ENCODE measurements at regions of chr3 and their contacts with region 1.

Region 1: GRCh38 chr3:5057857-5058324 is 64.2 kb upstream of the ARL8B start:
- DNase-seq: peak; percentile 38
- ATAC-seq: peak; percentile 90
- H3K4me3 Mint-ChIP-seq: no peak overlapping the region
- H3K27ac Mint-ChIP-seq: peak overlapping the region; percentile 3
- H3K4me1 Mint-ChIP-seq: peaks cover 42% of the 10 kb centered on the region
- H3K27me3 Mint-ChIP-seq: no peaks in the 10 kb centered on the region
- CTCF ChIP-seq: peak; percentile 26

Region 2: DNA sequence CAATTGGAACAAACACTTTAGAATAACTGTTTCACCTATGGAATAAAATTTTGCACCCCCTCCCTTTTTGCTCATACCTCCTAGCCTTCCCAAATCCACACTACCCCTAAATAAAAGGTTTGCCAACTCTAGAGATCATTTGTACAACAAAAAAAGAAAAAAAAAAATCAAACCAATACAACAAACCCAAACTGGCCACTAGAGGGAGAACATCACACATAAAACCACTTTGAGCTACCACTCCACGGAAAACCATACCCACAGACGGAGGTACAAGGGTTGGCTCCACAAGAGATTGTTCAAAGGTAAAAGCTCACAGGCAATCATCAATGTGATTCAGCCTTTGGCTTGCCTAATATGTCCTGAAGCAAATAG is 707.1 kb before region 1 on chr3:
- CTCF ChIA-PET with region 1: interaction called, 4 read pairs
- POLR2A ChIA-PET with region 1: no interaction called
- intact Hi-C with region 1: loop called (anchors 2 kb)
- DNase-seq: no peak
- ATAC-seq: peak; percentile 88
- H3K4me3 Mint-ChIP-seq: peak overlapping the region; percentile 44
- H3K27ac Mint-ChIP-seq: peak overlapping the region; percentile 8
- H3K4me1 Mint-ChIP-seq: peaks cover 9% of the 10 kb centered on the region
- H3K27me3 Mint-ChIP-seq: no peaks in the 10 kb centered on the region
- CTCF ChIP-seq: peak; percentile 26

Region 3: DNA sequence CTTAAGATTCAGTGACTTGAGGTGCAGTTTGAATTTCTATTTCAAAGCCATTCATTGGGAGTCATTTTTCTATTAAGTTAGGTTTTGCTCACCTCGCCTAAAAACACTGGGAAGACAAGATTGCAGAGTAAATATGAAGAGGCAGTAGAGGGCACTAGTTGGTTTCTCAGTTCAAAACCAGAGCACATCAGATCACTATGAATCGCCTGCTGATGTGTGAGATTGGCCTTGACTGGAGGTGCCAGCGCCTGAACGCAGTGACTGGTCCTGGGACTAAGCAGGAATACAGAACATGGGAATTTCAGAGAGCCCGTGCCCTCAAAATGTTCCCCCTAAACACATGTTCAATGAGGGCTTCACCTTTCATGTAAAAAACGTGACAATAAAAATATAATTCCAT is 335.8 kb before region 1 on chr3:
- CTCF ChIA-PET with region 1: interaction called, 8 read pairs
- POLR2A ChIA-PET with region 1: no interaction called
- intact Hi-C with region 1: loop called (anchors 1 kb)
- DNase-seq: no peak
- ATAC-seq: no peak
- H3K4me3 Mint-ChIP-seq: no peak overlapping the region
- H3K27ac Mint-ChIP-seq: peak overlapping the region; percentile 64
- H3K4me1 Mint-ChIP-seq: no peaks in the 10 kb centered on the region
- H3K27me3 Mint-ChIP-seq: no peaks in the 10 kb centered on the region
- CTCF ChIP-seq: no peak

Region 4: DNA sequence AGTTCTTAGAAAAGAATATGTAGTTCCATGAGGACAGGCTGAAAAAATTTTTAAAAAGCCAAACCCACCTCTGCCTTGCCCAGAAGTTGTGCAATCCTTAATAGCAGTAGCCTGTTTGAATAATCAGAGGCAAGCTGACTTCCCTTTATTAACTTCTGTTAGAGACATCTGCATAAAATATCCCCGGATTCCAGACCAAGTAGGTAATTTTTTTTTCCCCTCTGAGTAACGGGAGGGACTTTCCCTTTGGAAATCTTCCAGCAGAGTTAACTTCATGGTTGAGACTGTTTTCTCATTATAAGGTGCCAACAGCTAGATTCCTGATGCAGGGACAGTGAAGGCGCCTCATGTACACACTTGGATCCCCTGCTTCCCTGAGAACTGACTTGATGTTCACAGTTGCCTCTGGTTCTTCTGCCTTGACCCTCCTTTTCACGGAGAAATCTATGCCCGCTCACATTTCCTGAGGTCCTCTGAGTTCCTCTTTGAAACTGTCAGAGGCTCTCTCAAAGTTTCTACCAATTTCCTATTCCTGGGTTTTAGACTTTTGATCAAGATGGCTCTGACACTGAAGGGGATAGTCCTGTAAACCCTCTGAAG is 306.3 kb before region 1 on chr3:
- CTCF ChIA-PET with region 1: interaction called, 14 read pairs
- POLR2A ChIA-PET with region 1: no interaction called
- intact Hi-C with region 1: no loop called
- DNase-seq: no peak
- ATAC-seq: no peak
- H3K4me3 Mint-ChIP-seq: no peak overlapping the region
- H3K27ac Mint-ChIP-seq: peak overlapping the region; percentile 80
- H3K4me1 Mint-ChIP-seq: peaks cover 32% of the 10 kb centered on the region
- H3K27me3 Mint-ChIP-seq: no peaks in the 10 kb centered on the region
- CTCF ChIP-seq: no peak

Region 5: GRCh38 chr3:5016218-5017161 is 41.4 kb before region 1 on chr3:
- CTCF ChIA-PET with region 1: interaction called, 17 read pairs
- POLR2A ChIA-PET with region 1: interaction called, 5 read pairs
- intact Hi-C with region 1: loop called (anchors 1 kb)
- DNase-seq: no peak
- ATAC-seq: peak; percentile 18
- H3K4me3 Mint-ChIP-seq: peak overlapping the region; percentile 16
- H3K27ac Mint-ChIP-seq: peak overlapping the region; percentile 66
- H3K4me1 Mint-ChIP-seq: peaks cover 86% of the 10 kb centered on the region
- H3K27me3 Mint-ChIP-seq: no peaks in the 10 kb centered on the region
- CTCF ChIP-seq: no peak

Region 6: GRCh38 chr3:5035692-5036391 is 22.0 kb before region 1 on chr3:
- CTCF ChIA-PET with region 1: interaction called, 5 read pairs
- POLR2A ChIA-PET with region 1: interaction called, 5 read pairs
- intact Hi-C with region 1: loop called (anchors 2 kb)
- DNase-seq: no peak
- ATAC-seq: peak; percentile 64
- H3K4me3 Mint-ChIP-seq: no peak overlapping the region
- H3K27ac Mint-ChIP-seq: no peak overlapping the region
- H3K4me1 Mint-ChIP-seq: peaks cover 40% of the 10 kb centered on the region
- H3K27me3 Mint-ChIP-seq: no peaks in the 10 kb centered on the region
- CTCF ChIP-seq: no peak

Measured in activated B cell treated with CpG ODN at 0.5 μM for 24 hours (primary cell).